MCF 10A (cell line): ENCODE measurements at regions of chr7 and their contacts with region 1.

Region 1: GRCh38 chr7:91082852-91083495 is 181.3 kb upstream of the FZD1 start:
- DNase-seq: peak; percentile 36
- H3K4me3 Mint-ChIP-seq: no peak overlapping the region
- H3K27ac Mint-ChIP-seq: no peak overlapping the region
- H3K4me1 Mint-ChIP-seq: no peaks in the 10 kb centered on the region
- H3K27me3 Mint-ChIP-seq: no peaks in the 10 kb centered on the region
- CTCF ChIP-seq: peak; percentile 62

Region 2: GRCh38 chr7:91020636-91021385 is 62.2 kb before region 1 on chr7:
- CTCF ChIA-PET with region 1: no interaction called
- POLR2A ChIA-PET with region 1: no interaction called
- intact Hi-C with region 1: no loop called
- DNase-seq: peak; percentile 24
- H3K4me3 Mint-ChIP-seq: no peak overlapping the region
- H3K27ac Mint-ChIP-seq: no peak overlapping the region
- H3K4me1 Mint-ChIP-seq: peaks cover 15% of the 10 kb centered on the region
- H3K27me3 Mint-ChIP-seq: no peaks in the 10 kb centered on the region
- CTCF ChIP-seq: no peak

Region 3: GRCh38 chr7:91249506-91250240 is 166.7 kb after region 1 on chr7:
- CTCF ChIA-PET with region 1: interaction called, 10 read pairs
- POLR2A ChIA-PET with region 1: no interaction called
- intact Hi-C with region 1: no loop called
- DNase-seq: peak; percentile 95
- H3K4me3 Mint-ChIP-seq: no peak overlapping the region
- H3K27ac Mint-ChIP-seq: peak overlapping the region; percentile 80
- H3K4me1 Mint-ChIP-seq: peaks cover 25% of the 10 kb centered on the region
- H3K27me3 Mint-ChIP-seq: no peaks in the 10 kb centered on the region
- CTCF ChIP-seq: no peak

Region 4: GRCh38 chr7:91609525-91609924 is 526.6 kb after region 1 on chr7:
- CTCF ChIA-PET with region 1: interaction called, 6 read pairs
- POLR2A ChIA-PET with region 1: no interaction called
- intact Hi-C with region 1: loop called (anchors 1 kb)
- DNase-seq: no peak
- H3K4me3 Mint-ChIP-seq: no peak overlapping the region
- H3K27ac Mint-ChIP-seq: no peak overlapping the region
- H3K4me1 Mint-ChIP-seq: peaks cover 6% of the 10 kb centered on the region
- H3K27me3 Mint-ChIP-seq: no peaks in the 10 kb centered on the region
- CTCF ChIP-seq: no peak

Region 5: GRCh38 chr7:91636129-91636724 is 553.3 kb after region 1 on chr7:
- CTCF ChIA-PET with region 1: interaction called, 5 read pairs
- POLR2A ChIA-PET with region 1: no interaction called
- intact Hi-C with region 1: loop called (anchors 1 kb)
- DNase-seq: peak; percentile 67
- H3K4me3 Mint-ChIP-seq: no peak overlapping the region
- H3K27ac Mint-ChIP-seq: no peak overlapping the region
- H3K4me1 Mint-ChIP-seq: peaks cover 6% of the 10 kb centered on the region
- H3K27me3 Mint-ChIP-seq: no peaks in the 10 kb centered on the region
- CTCF ChIP-seq: peak; percentile 50